ENCODE measurements at regions of chr2 and their contacts with region 1.

Region 1: GRCh38 chr2:112749755-112750559 is 14.5 kb downstream of the CKAP2L start:
- DNase-seq: peak; percentile 71
- ATAC-seq: peak; percentile 92
- H3K4me3 Mint-ChIP-seq: no peak overlapping the region
- H3K27ac Mint-ChIP-seq: peak overlapping the region; percentile 16
- H3K4me1 Mint-ChIP-seq: peaks cover 12% of the 10 kb centered on the region
- H3K27me3 Mint-ChIP-seq: no peaks in the 10 kb centered on the region
- CTCF ChIP-seq: no peak

Region 2: DNA sequence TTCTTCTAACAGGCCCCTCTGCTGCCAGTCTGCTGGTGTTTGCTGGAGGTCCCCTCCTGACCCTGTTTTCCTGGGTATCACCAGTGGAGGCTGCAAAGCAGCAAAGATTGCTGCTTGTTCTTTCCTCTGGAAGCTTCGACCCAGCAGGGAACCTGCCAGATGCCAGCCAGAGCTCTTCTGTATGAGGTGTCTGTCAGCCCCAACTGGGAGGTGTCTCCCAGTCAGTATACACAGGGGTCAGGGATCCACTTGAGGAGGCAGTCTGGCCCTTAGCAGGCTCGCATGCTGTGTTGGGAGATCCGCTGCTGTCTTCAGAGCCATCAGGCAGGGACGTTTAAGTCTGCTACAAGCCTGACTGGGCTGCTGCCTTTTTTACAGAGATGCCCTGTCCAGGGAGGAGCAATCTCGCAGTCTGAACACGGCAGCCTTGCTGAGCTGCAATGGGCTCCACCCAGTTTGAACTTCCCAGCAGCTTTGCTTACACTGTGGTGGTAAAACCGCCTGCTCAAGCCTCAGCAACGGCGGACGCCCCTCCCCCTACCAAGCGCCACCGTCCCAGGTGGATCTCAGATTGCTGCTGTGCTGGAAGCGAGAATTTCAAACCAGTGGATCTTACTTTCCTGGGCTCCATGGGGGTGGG is 135.6 kb before region 1 on chr2:
- CTCF ChIA-PET with region 1: no interaction called
- POLR2A ChIA-PET with region 1: no interaction called
- intact Hi-C with region 1: no loop called
- DNase-seq: no peak
- ATAC-seq: no peak
- H3K4me3 Mint-ChIP-seq: no peak overlapping the region
- H3K27ac Mint-ChIP-seq: no peak overlapping the region
- H3K4me1 Mint-ChIP-seq: no peaks in the 10 kb centered on the region
- H3K27me3 Mint-ChIP-seq: peaks cover 2% of the 10 kb centered on the region
- CTCF ChIP-seq: no peak

Region 3: DNA sequence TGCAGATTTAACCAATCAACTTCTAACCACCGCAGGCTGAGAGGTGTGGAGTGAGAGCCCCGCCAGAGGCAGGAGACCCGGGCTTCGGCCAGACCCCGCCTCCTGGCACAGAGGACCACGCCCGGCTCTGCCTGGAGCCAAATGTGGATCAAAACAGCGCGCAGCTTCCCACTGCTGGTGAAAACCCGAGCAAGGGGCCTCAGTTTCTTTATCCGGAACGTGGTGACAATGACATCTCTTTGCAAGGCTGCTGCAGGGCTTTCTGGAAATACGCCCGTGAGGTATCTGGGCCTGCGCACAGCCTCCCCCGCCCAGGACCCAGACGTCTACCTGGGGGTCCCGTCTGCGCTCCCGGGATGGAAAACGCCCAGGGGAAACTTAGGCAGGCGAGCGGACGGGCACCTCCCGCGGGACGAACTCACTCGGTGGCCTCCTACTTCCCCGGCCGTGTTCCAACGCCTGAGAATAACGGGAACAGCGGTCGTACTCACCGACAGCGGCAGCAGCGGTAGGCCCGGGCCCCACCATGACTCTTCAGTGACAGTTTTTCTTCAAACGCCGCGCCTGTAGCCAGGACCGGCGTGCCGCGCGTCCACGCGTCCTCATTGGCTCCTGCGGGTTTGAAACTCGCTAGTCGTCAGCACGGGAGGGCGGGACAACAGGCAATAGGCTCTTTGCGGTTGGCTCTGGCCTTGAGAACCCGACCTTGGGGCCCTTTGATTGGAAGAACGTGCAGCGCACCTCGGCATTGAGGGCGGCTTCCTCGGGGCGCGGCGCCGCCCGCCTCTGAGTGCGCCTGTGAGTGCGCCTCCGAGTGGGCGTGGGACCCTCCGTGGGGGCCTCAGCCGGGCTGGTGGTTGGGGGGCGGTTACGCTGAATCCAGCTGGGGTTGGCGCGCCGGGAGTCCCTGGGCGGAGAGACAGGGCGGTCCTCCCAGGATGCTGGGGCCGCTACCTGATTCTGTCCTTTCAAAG is 14.4 kb after region 1 on chr2 and contains the start of gene CKAP2L:
- CTCF ChIA-PET with region 1: interaction called, 5 read pairs
- POLR2A ChIA-PET with region 1: no interaction called
- intact Hi-C with region 1: loop called (anchors 1 kb)
- DNase-seq: peak; percentile 87
- ATAC-seq: peak; percentile 100
- H3K4me3 Mint-ChIP-seq: peak within 1 kb of the TSS; percentile 91
- H3K27ac Mint-ChIP-seq: peak within 1 kb of the TSS; percentile 50
- H3K4me1 Mint-ChIP-seq: peaks cover 31% of the 10 kb centered on the region
- H3K27me3 Mint-ChIP-seq: no peaks in the 10 kb centered on the region
- CTCF ChIP-seq: no peak
- total RNA-seq, gene CKAP2L: 1.2 TPM in 2 replicates

Region 4: DNA sequence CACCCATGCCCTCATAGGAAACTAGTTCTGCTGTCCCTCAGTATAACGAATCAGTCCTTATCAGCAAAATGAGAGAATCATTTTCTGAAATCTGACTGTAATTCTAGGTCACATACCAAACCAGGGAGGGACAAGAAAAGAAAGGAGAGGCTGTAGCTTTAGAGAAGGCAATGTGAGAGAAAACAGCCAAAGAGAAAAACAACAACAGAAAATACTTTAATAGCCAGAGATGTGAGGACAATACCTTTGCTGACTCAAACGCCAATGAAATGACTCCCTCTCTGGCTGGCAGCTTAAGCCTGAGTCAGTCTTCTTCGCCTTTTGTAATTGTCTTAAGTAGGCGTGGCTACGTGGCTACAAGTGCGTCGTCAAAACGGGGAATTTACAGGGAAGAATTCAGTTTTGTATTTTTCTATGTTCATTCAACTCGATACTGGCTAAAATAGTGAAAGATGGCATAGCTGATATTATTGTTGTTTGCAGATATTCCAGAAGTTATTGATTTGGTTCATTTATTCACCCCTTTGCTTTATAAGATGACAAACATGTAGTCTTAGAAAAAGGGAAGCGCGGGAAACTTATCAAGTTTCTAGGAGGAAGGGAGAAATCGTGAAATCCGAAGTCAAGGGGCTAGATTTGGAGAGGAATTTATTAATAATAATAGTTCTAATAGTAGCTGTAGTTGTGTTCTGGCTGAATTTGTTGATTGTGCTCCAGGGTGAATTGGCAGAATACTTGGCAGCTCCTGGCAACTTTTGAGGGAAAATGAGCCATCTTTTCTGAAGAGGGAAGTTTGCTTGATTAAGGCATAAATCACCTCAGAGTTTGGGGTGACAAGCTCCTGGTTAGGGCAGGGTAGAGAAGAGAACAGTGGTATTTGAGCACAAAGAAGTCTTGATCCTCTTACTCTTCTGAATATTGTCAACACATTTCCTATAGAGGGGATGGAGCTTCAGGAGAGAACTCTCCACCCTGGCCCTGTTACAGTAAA is 34.5 kb after region 1 on chr2 and contains the start of gene IL1A:
- CTCF ChIA-PET with region 1: interaction called, 5 read pairs
- POLR2A ChIA-PET with region 1: interaction called, 7 read pairs
- intact Hi-C with region 1: loop called (anchors 2 kb)
- DNase-seq: no peak
- ATAC-seq: peak; percentile 32
- H3K4me3 Mint-ChIP-seq: peak within 1 kb of the TSS; percentile 73
- H3K27ac Mint-ChIP-seq: peak within 1 kb of the TSS; percentile 88
- H3K4me1 Mint-ChIP-seq: peaks cover 39% of the 10 kb centered on the region
- H3K27me3 Mint-ChIP-seq: no peaks in the 10 kb centered on the region
- CTCF ChIP-seq: no peak
- total RNA-seq, gene IL1A: 1.4 and 1.9 TPM in 2 replicates

Region 5: DNA sequence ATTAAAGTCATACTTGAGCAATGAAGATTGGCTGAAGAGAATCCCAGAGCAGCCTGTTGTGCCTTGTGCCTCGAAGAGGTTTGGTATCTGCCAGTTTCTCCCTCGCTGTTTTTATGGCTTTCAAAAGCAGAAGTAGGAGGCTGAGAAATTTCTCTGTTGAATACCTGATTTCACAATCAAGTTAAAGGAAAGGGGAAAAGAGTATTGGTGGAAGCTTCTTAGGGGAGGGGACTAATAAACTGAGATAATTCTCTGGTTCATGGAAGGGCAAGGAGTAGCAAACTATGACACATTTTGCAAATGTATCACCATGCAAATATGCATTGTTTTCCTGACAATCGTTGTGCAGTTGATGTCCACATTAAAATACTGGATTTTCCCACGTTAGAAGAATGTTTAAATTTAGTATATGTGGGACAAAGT is 86.7 kb after region 1 on chr2 and contains the start of gene IL1B:
- CTCF ChIA-PET with region 1: interaction called, 3 read pairs
- POLR2A ChIA-PET with region 1: interaction called, 3 read pairs
- intact Hi-C with region 1: loop called (anchors 1 kb)
- DNase-seq: no peak
- ATAC-seq: peak; percentile 14
- H3K4me3 Mint-ChIP-seq: no peak within 1 kb of the TSS
- H3K27ac Mint-ChIP-seq: peak within 1 kb of the TSS; percentile 10
- H3K4me1 Mint-ChIP-seq: peaks cover 55% of the 10 kb centered on the region
- H3K27me3 Mint-ChIP-seq: no peaks in the 10 kb centered on the region
- CTCF ChIP-seq: no peak
- total RNA-seq, gene IL1B: 0.53 and 0.71 TPM in 2 replicates

Region 6: GRCh38 chr2:112884869-112885505 is 135.0 kb after region 1 on chr2:
- CTCF ChIA-PET with region 1: interaction called, 302 read pairs
- POLR2A ChIA-PET with region 1: interaction called, 11 read pairs
- intact Hi-C with region 1: loop called (anchors 1 kb)
- DNase-seq: peak; percentile 52
- ATAC-seq: peak; percentile 58
- H3K4me3 Mint-ChIP-seq: no peak overlapping the region
- H3K27ac Mint-ChIP-seq: no peak overlapping the region
- H3K4me1 Mint-ChIP-seq: peaks cover 23% of the 10 kb centered on the region
- H3K27me3 Mint-ChIP-seq: no peaks in the 10 kb centered on the region
- CTCF ChIP-seq: peak; percentile 36

Region 7: DNA sequence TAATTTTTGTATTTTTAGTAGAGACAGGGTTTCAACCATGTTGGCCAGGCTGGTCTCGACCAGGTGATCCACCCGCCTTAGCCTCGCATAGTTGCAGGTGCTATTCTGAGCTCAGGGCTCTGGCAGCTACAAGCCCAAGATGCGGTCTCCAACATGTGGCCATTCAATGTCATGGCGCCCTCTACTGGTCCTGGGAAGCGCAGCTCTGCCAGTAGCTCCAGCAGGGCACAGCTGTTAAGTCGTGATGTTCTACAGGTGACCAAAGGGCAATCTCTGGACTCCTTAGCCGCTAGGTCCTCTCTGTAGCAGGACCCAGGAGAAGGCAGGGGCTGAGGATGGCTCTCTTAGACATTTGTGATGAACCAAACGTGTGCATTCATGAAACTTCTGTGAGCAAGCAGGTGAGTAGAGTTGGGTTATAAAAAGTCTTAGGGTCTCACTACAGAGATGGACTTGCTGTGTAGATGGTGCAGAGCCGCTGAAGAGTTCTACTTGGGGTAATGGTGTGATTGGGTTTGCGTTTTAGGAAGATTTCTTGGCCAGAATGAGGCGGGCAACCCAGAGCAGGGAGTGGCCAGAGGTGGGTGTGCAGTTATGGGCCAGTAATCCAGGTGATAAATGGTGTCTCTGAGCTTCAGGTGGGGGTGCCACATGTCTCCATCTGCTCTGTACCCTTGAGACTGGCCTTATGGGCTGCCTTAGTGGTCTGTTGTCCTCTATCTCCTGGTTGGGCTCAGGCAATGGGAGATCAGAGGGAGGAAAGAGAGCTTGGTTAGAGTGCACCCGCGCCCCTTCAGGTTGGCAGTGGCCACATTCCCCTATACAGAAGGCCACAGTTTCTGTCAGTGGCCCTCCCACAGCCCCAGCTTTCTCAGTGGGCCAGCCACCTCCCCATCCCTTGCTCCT is 192.0 kb after region 1 on chr2:
- CTCF ChIA-PET with region 1: interaction called, 66 read pairs
- POLR2A ChIA-PET with region 1: no interaction called
- intact Hi-C with region 1: loop called (anchors 1 kb)
- DNase-seq: peak; percentile 29
- ATAC-seq: peak; percentile 71
- H3K4me3 Mint-ChIP-seq: no peak overlapping the region
- H3K27ac Mint-ChIP-seq: no peak overlapping the region
- H3K4me1 Mint-ChIP-seq: no peaks in the 10 kb centered on the region
- H3K27me3 Mint-ChIP-seq: peaks cover 7% of the 10 kb centered on the region
- CTCF ChIP-seq: no peak

Region 8: GRCh38 chr2:112958428-112959108 is 208.6 kb after region 1 on chr2:
- CTCF ChIA-PET with region 1: interaction called, 22 read pairs
- POLR2A ChIA-PET with region 1: no interaction called
- intact Hi-C with region 1: loop called (anchors 1 kb)
- DNase-seq: no peak
- ATAC-seq: peak; percentile 82
- H3K4me3 Mint-ChIP-seq: no peak overlapping the region
- H3K27ac Mint-ChIP-seq: no peak overlapping the region
- H3K4me1 Mint-ChIP-seq: no peaks in the 10 kb centered on the region
- H3K27me3 Mint-ChIP-seq: no peaks in the 10 kb centered on the region
- CTCF ChIP-seq: no peak